Sciatic nerve (tissue), 2 donors: ENCODE measurements at regions of chr1 and their contacts with region 1.

Region 1: GRCh38 chr1:174032671-174033222 is 10.6 kb upstream of the RC3H1 start:
- DNase-seq: no peak
- ATAC-seq: no peak

Region 2: GRCh38 chr1:173043253-173043652 is 989.5 kb before region 1 on chr1:
- intact Hi-C with region 1: no loop called
- DNase-seq: no peak
- ATAC-seq: no peak

Region 3: DNA sequence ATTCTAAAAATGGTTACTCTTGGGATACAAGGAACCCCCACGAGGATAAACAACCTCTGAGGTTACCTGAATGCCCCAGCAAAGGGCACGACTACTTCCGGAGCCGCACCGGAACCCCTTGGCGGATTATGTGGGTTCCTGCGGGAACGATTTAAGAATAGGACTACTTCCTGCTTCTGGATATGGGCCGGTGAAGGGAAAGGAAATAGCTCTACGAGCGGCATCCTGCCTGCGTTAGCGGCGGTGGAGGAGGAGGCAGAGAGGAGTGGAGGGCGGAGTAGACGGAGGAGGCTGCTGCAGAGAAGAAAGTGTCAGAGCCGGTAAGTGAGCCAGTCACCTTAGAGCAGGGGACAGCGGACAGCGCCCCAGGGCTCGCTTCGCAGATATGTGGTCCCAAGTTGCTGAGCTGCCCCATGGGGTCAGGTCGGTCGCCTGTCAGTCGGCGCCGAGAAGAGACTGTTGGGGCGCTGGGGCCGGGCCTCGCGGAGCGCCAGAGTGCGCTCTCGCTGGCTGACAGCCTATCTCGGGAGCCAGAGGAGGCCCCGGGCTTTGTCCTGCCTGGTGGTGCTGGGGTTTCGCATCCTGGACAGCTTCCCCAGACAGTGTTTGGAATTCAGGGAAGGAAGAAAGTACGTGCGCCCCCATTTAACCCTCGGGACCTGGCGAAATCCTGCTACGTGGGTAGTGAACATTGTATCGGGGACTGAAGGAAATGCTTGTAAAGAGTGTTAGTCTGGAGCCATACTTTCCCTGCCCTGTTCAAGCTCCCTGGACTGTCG is 317.8 kb before region 1 on chr1 and contains the start of gene KLHL20:
- intact Hi-C with region 1: no loop called
- DNase-seq: peak; percentile 82
- ATAC-seq: peak; percentile 98
- total RNA-seq, gene KLHL20: 33.4 TPM

Region 4: DNA sequence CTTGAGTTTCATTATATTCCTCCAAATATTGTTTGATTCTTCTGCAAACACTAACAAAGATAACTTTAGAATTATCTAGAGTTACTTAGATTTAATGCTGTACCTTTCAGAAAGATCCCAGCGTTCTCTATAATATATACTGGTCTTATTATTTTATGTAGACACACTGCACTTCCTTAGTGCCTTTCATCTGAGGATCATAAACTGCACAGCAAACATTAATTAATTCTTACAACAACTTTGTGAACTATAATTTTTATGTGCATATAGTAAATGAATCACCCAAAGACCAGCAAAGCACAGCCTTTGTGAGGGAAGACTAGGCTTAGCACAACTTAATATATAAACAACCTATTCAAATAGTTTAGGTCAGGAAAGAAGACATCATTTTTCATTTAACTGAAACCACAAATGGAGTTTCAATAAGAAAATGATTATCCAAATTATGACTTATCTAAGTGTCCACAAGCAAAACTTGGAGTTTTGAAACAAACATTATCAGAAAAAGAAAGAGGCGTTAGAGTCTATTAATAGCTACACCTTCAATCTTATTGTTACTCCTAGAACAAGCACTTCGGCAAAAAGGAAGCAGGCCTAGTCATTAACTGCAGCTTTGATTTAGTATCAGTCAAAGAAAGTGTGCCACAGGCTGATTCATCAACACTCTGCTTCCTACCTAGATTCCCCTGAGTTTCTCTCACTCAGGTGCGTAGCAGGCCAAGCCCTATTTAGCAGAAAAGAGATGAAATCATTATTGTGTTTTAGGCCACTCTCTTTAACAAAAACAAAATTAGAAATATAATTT is 11.9 kb after region 1 on chr1:
- intact Hi-C with region 1: no loop called
- DNase-seq: no peak
- ATAC-seq: no peak

Region 5: GRCh38 chr1:174850726-174851125 is 818.0 kb after region 1 on chr1:
- intact Hi-C with region 1: loop called (anchors 5 kb)
- DNase-seq: no peak
- ATAC-seq: no peak